ENCODE measurements at regions of chr9 and their contacts with region 1.

Region 1: GRCh38 chr9:124447297-124447661 is 3.0 kb upstream of the ADGRD2 start:
- DNase-seq: no peak
- ATAC-seq: no peak
- H3K4me3 ChIP-seq: no peak overlapping the region
- H3K27ac ChIP-seq: no peak overlapping the region
- H3K4me1 ChIP-seq: no peaks in the 10 kb centered on the region
- H3K27me3 ChIP-seq: peaks cover 5 to 9% of the 10 kb centered on the region in 2 experiments; a peak in 3 of 4 replicates
- CTCF ChIP-seq: no peak
- EP300 ChIP-seq: no peak
- POLR2A ChIP-seq: no peak
- RAD21 ChIP-seq: no peak

Region 2: GRCh38 chr9:124420991-124421543 is 26.2 kb before region 1 on chr9:
- CTCF ChIA-PET with region 1: interaction called, 5 read pairs
- POLR2A ChIA-PET with region 1: no interaction called
- RAD21 ChIA-PET with region 1: no interaction called
- SMC1A ChIA-PET with region 1: no interaction called
- in situ Hi-C with region 1: no loop called
- intact Hi-C with region 1: loop called (anchors 2 kb)
- DNase-seq: no peak
- ATAC-seq: no peak
- H3K4me3 ChIP-seq: no peak overlapping the region
- H3K27ac ChIP-seq: no peak overlapping the region
- H3K4me1 ChIP-seq: peaks cover 9% of the 10 kb centered on the region
- H3K27me3 ChIP-seq: no peaks in the 10 kb centered on the region
- CTCF ChIP-seq: no peak
- EP300 ChIP-seq: no peak
- POLR2A ChIP-seq: no peak
- RAD21 ChIP-seq: no peak

Region 3: GRCh38 chr9:124820698-124821623 is 373.7 kb after region 1 on chr9:
- CTCF ChIA-PET with region 1: no interaction called
- POLR2A ChIA-PET with region 1: no interaction called
- RAD21 ChIA-PET with region 1: no interaction called
- SMC1A ChIA-PET with region 1: no interaction called
- in situ Hi-C with region 1: no loop called
- intact Hi-C with region 1: no loop called
- DNase-seq: no peak
- ATAC-seq: no peak
- H3K4me3 ChIP-seq: no peak overlapping the region
- H3K27ac ChIP-seq: no peak overlapping the region
- H3K4me1 ChIP-seq: peaks cover 15% of the 10 kb centered on the region
- H3K27me3 ChIP-seq: no peaks in the 10 kb centered on the region
- CTCF ChIP-seq: no peak
- EP300 ChIP-seq: no peak
- POLR2A ChIP-seq: no peak
- RAD21 ChIP-seq: no peak

Measured in GM12878 (cell line).